ENCODE measurements at regions of chr10 and their contacts with region 1.

Region 1: DNA sequence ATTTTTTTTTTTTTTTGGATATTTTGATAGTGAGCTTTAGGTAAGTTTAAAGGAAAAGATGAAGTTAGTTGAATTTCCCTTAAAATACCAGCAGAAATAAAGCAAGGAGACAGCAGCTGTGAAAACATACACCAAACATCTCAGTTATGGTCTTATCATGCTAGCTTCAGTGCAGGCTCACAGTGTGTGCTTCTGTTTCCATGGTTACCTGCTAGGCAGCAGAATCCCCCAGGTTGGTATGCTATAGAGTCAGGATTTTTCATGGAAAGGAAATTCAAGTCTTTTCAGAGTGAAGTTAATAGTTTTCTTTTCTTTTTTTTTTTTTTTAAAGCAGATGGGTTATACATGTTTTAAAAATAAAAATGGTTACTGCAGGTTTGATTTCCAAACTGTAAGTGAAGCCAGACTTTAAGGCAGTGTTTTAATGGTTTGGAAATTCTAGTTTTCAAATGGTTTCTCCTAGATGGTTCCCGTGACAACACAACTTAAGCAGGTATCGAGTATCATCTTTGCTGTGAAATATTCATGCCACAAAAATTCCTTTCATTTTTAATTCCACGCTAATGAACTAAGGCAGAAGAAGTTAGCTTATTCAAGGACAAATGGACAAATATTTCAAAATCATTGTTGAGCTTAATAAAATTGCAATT is 230.9 kb downstream of the BICC1 start:
- DNase-seq: no peak
- H3K4me3 Mint-ChIP-seq: no peak overlapping the region
- H3K27ac Mint-ChIP-seq: no peak overlapping the region
- H3K4me1 Mint-ChIP-seq: peaks cover 20% of the 10 kb centered on the region
- H3K27me3 Mint-ChIP-seq: no peaks in the 10 kb centered on the region
- CTCF ChIP-seq: no peak

Region 2: GRCh38 chr10:58818900-58819299 is 75.3 kb after region 1 on chr10:
- CTCF ChIA-PET with region 1: no interaction called
- intact Hi-C with region 1: no loop called
- DNase-seq: peak; percentile 18
- H3K4me3 Mint-ChIP-seq: no peak overlapping the region
- H3K27ac Mint-ChIP-seq: no peak overlapping the region
- H3K4me1 Mint-ChIP-seq: peaks cover 22% of the 10 kb centered on the region
- H3K27me3 Mint-ChIP-seq: no peaks in the 10 kb centered on the region
- CTCF ChIP-seq: no peak

Region 3: GRCh38 chr10:58885686-58886345 is 142.2 kb after region 1 on chr10:
- CTCF ChIA-PET with region 1: interaction called, 11 read pairs
- intact Hi-C with region 1: no loop called
- DNase-seq: no peak
- H3K4me3 Mint-ChIP-seq: no peak overlapping the region
- H3K27ac Mint-ChIP-seq: no peak overlapping the region
- H3K4me1 Mint-ChIP-seq: no peaks in the 10 kb centered on the region
- H3K27me3 Mint-ChIP-seq: peaks cover 49% of the 10 kb centered on the region
- CTCF ChIP-seq: no peak

Measured in Calu3 (cell line).